MCF 10A (cell line): ENCODE measurements at regions of chr5 and their contacts with region 1.

Region 1: DNA sequence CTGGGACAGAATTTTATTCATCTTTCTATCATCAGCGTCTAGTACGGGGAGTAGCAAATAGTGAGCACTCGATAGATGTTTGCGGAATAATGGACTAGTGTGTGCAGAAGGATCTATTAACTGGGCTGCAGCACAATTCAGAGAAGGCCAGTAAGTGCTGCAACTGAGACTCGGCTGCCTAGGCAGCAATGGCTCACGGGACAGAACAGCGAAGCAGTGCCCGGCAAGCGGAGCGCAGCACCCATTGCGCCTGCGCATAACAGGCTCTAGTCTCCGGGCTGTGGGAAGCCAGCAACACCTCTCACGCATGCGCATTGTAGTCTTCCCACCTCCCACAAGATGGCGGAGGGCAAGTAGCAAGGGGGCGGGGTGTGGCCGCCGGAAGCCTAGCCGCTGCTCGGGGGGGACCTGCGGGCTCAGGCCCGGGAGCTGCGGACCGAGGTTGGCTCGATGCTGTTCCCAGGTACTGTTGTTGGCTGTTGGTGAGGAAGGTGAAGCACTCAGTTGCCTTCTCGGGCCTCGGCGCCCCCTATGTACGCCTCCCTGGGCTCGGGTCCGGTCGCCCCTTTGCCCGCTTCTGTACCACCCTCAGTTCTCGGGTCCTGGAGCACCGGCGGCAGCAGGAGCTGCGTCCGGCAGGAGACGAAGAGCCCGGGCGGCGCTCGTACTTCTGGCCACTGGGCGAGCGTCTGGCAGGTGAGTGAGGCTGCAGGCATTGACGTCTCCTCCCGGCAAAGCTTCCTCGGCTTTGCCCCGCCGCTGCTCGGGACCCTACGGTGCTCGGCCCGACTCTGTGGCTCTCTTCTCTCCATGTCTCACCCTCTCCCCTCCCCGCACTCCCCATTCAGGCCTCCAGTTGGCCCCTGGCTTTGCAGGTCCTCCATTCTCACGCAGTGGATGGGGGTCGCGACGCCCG is 30.2 kb upstream of the APC start:
- DNase-seq: peak; percentile 98
- H3K4me3 Mint-ChIP-seq: peak overlapping the region; percentile 99
- H3K27ac Mint-ChIP-seq: peak overlapping the region; percentile 90
- H3K4me1 Mint-ChIP-seq: peaks cover 29% of the 10 kb centered on the region
- H3K27me3 Mint-ChIP-seq: no peaks in the 10 kb centered on the region
- CTCF ChIP-seq: no peak

Region 2: GRCh38 chr5:112737463-112738190 is 30.2 kb after region 1 on chr5 and contains the start of gene APC:
- CTCF ChIA-PET with region 1: interaction called, 3 read pairs
- POLR2A ChIA-PET with region 1: interaction called, 44 read pairs
- intact Hi-C with region 1: no loop called
- DNase-seq: peak; percentile 91
- H3K4me3 Mint-ChIP-seq: peak within 1 kb of the TSS; percentile 92
- H3K27ac Mint-ChIP-seq: peak within 1 kb of the TSS; percentile 92
- H3K4me1 Mint-ChIP-seq: peaks cover 6% of the 10 kb centered on the region
- H3K27me3 Mint-ChIP-seq: no peaks in the 10 kb centered on the region
- CTCF ChIP-seq: no peak
- total RNA-seq, gene APC: 24.9 and 31.8 TPM in 2 replicates